Left ventricle myocardium superior (tissue), 1 donor: ENCODE measurements at regions of chr5 and their contacts with region 1.

Region 1: DNA sequence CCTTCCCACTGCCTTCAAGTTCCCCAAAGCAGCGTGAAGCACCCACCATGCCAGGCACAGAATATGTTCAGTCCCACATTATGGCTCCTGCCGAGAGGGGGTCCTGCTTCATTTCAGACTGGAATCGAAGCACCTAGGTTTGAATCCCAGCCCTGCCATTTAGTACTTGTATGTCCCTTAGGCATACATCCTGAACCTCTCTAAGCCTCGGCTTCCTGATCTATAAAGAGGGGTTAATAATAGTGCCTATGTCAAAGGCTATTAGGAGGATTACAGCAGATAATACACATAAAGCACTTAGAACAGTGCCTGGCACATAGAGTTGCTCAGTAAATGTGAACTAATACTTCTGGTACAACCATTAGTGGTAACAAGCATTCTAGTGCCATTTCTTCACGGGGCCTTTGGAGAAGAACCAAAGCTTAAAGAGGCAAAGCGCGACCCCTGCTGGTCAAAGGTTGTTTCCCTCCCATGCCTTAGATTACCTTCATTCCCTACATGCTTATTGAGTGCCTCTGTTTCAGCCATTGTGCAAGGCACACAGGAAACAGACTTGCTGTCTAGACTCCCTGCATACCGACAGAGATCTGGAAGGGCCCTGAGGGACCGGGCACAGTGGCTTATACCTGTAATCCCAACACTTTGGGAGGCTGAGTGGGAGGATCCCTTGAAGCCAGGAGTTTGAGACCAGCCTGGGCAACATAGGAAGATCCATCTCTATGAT is 98.2 kb downstream of the PPARGC1B start:
- DNase-seq: peak; percentile 90
- ATAC-seq: peak; percentile 59

Region 2: DNA sequence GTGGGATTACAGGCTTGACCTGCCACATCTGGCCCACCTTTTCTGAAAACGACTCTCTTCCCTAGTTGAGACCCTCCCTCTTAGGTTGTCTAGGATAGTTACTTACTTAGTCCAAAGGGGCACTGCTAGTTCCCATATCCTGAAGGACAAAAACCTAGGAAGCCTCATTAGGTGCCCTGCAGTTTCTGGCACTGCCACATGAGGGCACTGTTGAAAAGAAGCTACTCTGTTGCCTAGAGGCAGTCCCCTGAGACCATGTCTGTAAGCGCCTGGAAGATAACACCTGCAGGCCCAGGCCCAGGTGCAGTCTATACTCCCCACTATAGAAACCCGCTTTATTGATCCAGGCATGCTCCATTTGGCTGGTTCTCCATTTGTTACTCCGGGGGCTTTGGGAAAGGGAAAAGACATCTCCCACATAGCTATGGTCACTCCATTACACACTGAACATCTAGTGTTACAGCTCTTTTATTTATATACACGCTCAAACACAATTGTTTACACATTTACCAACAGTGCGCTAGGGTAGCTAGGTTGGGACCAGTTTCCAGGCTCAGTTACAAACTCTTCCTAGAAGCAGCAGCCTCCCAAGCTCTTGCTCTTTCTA is 171.6 kb before region 1 on chr5:
- intact Hi-C with region 1: loop called (anchors 10 kb)
- DNase-seq: peak; percentile 67
- ATAC-seq: peak; percentile 42

Region 3: GRCh38 chr5:149731639-149732323 is 96.5 kb before region 1 on chr5:
- intact Hi-C with region 1: loop called (anchors 5 kb)
- DNase-seq: peak; percentile 90
- ATAC-seq: peak; percentile 79

Region 4: GRCh38 chr5:149765932-149766331 is 62.4 kb before region 1 on chr5:
- intact Hi-C with region 1: loop called (anchors 10 kb)
- DNase-seq: no peak
- ATAC-seq: no peak

Region 5: GRCh38 chr5:149960272-149961185 is 132.2 kb after region 1 on chr5 and contains the start of gene SLC26A2:
- intact Hi-C with region 1: no loop called
- DNase-seq: peak; percentile 98
- ATAC-seq: peak; percentile 100
- total RNA-seq, gene SLC26A2: 3.2 TPM